ENCODE measurements at regions of chr20 and their contacts with region 1.

Region 1: GRCh38 chr20:32789896-32790750 is 27.9 kb downstream of the DNMT3B start:
- DNase-seq: peak; percentile 54 to 74 (median 69)
- H3K4me3 ChIP-seq: no peak overlapping the region
- H3K27ac ChIP-seq: no peak overlapping the region
- H3K4me1 ChIP-seq: peaks cover 0 to 15% (median 8%) of the 10 kb centered on the region in 4 experiments
- H3K27me3 ChIP-seq: no peaks in the 10 kb centered on the region

Region 2: GRCh38 chr20:32674362-32674789 is 115.7 kb before region 1 on chr20:
- CTCF ChIA-PET with region 1: interaction called, 16 read pairs
- POLR2A ChIA-PET with region 1: no interaction called
- DNase-seq: peak; percentile 73 to 81 (median 81)
- H3K4me3 ChIP-seq: peak overlapping the region in 2 of 7 experiments; percentile 9 to 54
- H3K27ac ChIP-seq: peak overlapping the region in 1 of 2 experiments; percentile 86
- H3K4me1 ChIP-seq: peaks cover 17 to 93% (median 84%) of the 10 kb centered on the region in 4 experiments
- H3K27me3 ChIP-seq: no peaks in the 10 kb centered on the region

Region 3: DNA sequence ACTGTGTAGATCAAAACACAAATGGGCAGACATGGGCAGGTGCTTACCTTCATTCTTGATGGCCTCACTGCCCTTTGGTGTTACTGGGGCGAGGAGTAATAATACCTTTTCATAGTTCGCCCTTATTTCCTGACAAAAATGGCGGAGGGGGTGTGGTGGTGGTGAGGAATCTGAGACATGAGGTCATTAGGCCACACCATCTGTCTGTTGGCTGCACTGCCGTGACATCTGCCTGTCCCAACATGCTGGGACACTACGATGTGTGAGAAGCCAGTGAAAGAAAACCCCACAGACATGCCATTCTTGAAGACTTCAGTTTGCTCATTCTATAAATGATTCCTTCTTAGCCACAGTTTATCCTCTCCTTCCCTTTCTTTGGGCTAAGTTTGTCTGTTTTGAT is 16.2 kb after region 1 on chr20:
- CTCF ChIA-PET with region 1: interaction called, 22 read pairs
- POLR2A ChIA-PET with region 1: no interaction called
- DNase-seq: no peak
- H3K4me3 ChIP-seq: no peak overlapping the region
- H3K27ac ChIP-seq: no peak overlapping the region
- H3K4me1 ChIP-seq: no peaks in the 10 kb centered on the region
- H3K27me3 ChIP-seq: no peaks in the 10 kb centered on the region

Region 4: DNA sequence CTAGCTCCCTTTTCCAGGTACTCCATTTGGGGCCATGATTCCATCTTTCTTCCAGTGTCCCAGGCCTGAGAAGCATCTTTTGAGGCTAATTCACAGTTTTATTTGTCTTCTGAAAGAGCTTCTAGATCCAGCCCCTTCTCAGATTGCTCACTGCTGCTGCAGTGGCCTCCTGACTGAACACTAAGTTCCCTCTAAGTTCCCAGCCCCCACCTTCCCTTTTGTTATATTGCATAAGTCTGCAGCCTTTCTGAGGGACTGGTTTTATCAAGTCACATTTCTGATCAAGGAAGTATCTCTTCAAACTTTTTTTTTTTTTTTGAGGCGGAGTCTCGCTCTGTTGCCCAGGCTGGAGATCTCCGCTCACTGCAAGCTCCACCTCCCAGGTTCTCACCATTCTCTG is 40.3 kb after region 1 on chr20:
- CTCF ChIA-PET with region 1: interaction called, 11 read pairs
- POLR2A ChIA-PET with region 1: no interaction called
- DNase-seq: peak; percentile 36 to 77 (median 77)
- H3K4me3 ChIP-seq: no peak overlapping the region
- H3K27ac ChIP-seq: no peak overlapping the region
- H3K4me1 ChIP-seq: peaks cover 0 to 14% (median 3%) of the 10 kb centered on the region in 4 experiments
- H3K27me3 ChIP-seq: no peaks in the 10 kb centered on the region

Region 5: DNA sequence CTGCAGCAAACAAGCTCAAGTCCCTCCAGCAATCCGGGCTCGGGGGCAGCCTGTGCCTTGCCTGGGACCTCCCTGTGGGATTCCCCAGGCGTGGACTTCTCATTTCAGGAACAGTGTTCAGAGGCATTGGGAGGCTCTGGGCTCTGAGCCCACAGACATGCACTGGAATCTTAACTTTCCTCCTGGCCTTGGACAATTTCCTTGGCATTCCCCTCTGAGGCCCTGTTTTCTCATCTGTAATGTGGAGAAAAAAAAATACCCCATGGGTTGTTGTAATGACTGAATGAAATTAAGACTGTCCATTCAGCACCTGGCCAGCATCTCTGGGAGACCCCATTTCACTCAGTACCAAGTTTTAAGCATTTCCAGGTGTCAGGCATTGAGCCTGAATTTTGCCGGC is 306.9 kb after region 1 on chr20:
- CTCF ChIA-PET with region 1: interaction called, 10 read pairs
- POLR2A ChIA-PET with region 1: no interaction called
- DNase-seq: no peak
- H3K4me3 ChIP-seq: no peak overlapping the region
- H3K27ac ChIP-seq: no peak overlapping the region
- H3K4me1 ChIP-seq: no peaks in the 10 kb centered on the region
- H3K27me3 ChIP-seq: peaks cover 0 to 1% (median 0%) of the 10 kb centered on the region in 5 experiments